ENCODE measurements at regions of chr14 and their contacts with region 1.

Region 1: DNA sequence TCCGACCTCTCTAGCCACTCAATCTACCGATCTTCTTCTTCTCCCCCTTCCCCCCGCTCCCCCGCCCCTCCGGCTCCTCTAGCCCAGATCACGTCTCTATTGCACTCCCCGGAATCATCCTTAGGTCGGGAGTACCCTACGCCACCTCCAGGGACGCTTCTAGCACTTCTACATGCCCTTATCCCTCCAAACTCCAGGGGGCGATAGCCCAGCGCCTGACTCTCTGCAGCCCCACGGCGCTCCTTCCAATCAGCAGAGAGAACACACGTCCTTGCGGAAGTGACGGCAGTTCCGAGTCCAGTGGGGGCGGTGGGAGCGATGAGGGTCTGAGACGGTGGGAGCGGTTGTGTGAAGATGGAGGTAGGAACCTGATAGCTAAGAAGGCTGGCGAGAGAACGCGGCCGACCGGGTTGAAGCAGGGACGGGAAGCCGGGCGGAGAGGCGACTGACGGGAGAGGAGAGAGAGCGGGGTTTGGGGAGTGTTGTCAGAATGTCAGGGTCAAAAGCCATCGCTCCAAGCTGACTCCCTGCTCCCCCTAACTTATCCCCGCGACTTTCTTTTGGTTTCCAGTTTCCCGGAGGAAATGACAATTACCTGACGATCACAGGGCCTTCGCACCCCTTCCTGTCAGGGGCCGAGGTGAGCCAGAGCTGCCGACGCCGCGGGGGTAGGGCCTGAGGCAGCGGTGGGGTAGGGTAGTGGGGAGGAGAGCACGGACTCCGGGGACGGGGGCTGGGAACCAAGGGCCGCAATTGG is at the starts of genes RAB2B and TOX4:
- DNase-seq: peak; percentile 98
- ATAC-seq: peak; percentile 93
- H3K4me3 ChIP-seq: peak within 1 kb of the TSS; percentile 100
- H3K27ac ChIP-seq: peak within 1 kb of the TSS; percentile 61
- H3K4me1 ChIP-seq: peaks cover 13% of the 10 kb centered on the region
- H3K27me3 ChIP-seq: no peaks in the 10 kb centered on the region
- CTCF ChIP-seq: peak; percentile 94
- total RNA-seq, gene RAB2B: 11.7 and 26.8 TPM in 2 replicates
- total RNA-seq, gene TOX4: 26.7 and 38.5 TPM in 2 replicates

Region 2: DNA sequence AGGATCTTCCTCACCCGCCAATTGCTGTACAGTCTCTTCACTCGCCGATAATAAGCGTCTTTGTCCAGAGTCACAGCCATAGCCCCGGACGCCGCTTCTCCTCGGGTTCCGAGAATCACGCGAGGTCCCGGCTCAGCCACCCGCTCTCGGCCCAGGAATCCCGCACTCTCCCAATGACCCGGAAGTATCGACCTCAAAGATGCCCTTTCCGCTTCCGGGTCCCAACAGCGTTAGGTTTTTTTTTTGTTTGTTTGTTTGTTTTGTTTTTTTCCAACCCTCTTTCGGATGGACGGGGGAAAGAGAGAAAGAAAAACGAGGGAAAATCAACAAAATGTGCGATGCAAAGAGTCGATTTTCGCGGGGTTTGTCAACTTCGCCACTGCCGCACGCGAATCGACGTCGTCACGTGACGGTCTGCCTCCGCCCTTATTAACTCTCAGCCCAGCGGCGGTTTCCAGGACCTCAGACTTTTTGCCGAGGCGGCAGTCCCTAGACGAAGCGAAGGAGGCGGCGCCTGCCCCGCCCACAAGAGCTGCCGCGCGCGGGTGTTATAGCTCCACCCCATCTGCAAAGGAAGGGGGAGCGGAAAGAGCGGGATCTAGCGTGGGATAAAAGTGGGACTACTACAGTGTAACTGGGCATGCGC is 93.1 kb before region 1 on chr14 and contains the start of gene SUPT16H:
- CTCF ChIA-PET with region 1: no interaction called
- POLR2A ChIA-PET with region 1: no interaction called
- intact Hi-C with region 1: loop called (anchors 2 kb)
- DNase-seq: peak; percentile 95
- ATAC-seq: peak; percentile 90
- H3K4me3 ChIP-seq: peak within 1 kb of the TSS; percentile 80
- H3K27ac ChIP-seq: peak within 1 kb of the TSS; percentile 86
- H3K4me1 ChIP-seq: peaks cover 14% of the 10 kb centered on the region
- H3K27me3 ChIP-seq: no peaks in the 10 kb centered on the region
- CTCF ChIP-seq: no peak
- total RNA-seq, gene SUPT16H: 92.6 and 102 TPM in 2 replicates

Region 3: GRCh38 chr14:21437063-21437901 is 39.8 kb before region 1 on chr14:
- CTCF ChIA-PET with region 1: interaction called, 4 read pairs
- POLR2A ChIA-PET with region 1: no interaction called
- intact Hi-C with region 1: loop called (anchors 1 kb)
- DNase-seq: peak; percentile 99
- ATAC-seq: peak; percentile 99
- H3K4me3 ChIP-seq: peak overlapping the region; percentile 85
- H3K27ac ChIP-seq: peak overlapping the region; percentile 45
- H3K4me1 ChIP-seq: peaks cover 15% of the 10 kb centered on the region
- H3K27me3 ChIP-seq: no peaks in the 10 kb centered on the region
- CTCF ChIP-seq: no peak

Region 4: DNA sequence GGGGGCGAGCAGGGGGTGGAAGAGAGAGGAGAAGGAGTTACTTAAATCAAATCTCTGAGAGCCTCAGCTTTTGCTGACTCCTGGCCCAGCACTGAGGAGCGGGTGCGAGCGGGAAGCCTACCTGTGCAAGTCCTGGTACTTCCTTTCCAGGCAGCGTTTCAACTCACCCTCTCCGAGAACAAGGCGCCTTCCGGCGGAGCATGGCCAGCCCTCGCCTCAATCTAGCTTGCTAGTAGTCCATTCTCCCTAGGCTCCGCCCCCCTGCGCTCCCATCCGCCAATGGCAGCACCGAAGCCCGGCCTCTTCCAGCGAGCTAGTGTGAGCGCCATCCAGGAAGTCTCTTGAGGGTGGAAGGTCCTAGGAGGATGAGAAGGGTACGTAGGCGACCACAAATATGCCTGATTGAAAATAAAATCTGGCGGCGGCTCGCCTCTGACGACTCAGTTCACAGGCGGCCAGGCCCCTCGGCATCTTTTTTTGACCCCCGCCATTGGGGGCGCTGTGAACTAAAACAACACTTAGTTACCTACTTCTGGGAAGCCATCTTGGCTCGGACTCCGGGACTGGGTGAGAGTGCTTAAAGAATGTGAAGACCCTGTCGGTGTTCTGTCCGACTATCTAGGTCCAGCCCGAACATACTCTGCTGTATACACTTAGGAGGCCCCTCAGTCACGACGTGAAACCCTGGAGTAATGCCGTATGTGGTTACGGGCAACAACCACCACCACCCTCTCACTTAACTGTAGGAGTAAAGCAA is 21.0 kb before region 1 on chr14 and contains the start of gene CHD8:
- CTCF ChIA-PET with region 1: interaction called, 4 read pairs
- POLR2A ChIA-PET with region 1: interaction called, 3 read pairs
- intact Hi-C with region 1: loop called (anchors 1 kb)
- DNase-seq: peak; percentile 99
- ATAC-seq: peak; percentile 98
- H3K4me3 ChIP-seq: peak within 1 kb of the TSS; percentile 97
- H3K27ac ChIP-seq: peak within 1 kb of the TSS; percentile 81
- H3K4me1 ChIP-seq: peaks cover 12% of the 10 kb centered on the region
- H3K27me3 ChIP-seq: no peaks in the 10 kb centered on the region
- CTCF ChIP-seq: peak; percentile 81
- total RNA-seq, gene CHD8: 57.4 and 81.0 TPM in 2 replicates

Region 5: DNA sequence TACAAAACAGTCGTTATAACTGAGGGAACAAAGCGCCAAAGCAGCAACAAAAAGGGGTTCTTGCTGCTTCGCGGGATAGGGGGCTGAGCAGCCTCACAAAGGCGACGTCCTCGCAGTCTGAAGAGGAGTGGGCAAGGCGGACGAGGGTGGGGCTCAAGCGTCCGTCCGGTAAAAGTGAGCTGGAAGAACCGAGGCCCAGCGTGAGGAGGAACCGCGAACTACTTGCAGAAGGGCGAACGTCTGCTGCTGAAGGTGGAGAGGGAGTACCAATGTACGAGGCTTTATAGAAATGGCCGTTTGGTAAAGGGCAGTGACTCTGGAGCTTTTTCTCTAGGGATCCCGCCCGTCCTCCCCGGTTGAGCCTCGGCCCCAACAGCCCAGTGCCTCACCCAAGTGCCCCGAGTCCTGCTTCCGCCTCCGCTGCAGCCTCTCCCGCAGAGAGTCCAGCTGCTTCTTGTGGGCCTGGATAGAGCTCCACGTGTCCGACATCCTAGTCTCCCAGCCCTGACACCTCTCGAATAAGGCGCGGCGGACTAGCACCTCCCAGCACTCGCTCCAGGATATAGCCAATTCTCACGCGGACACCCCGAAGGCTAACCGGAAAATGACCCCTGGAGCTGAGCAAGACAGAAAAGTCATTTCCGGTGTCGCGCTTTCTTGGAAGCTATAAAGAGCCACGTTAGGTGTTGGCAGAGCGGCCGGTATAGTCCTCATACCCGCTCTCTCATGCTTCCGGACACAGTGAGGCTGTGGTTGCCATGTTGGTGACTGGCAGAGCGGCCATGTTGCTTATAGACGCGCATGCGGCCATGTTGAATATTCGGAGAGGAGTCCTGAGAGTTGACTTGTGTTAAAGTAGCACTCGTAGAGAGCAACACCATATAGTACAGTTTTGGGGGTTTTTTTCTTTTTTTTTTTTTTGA is 33.9 kb after region 1 on chr14 and contains the start of gene METTL3:
- CTCF ChIA-PET with region 1: no interaction called
- POLR2A ChIA-PET with region 1: no interaction called
- intact Hi-C with region 1: loop called (anchors 1 kb)
- DNase-seq: peak; percentile 98
- ATAC-seq: peak; percentile 98
- H3K4me3 ChIP-seq: peak within 1 kb of the TSS; percentile 96
- H3K27ac ChIP-seq: peak within 1 kb of the TSS; percentile 83
- H3K4me1 ChIP-seq: peaks cover 18% of the 10 kb centered on the region
- H3K27me3 ChIP-seq: no peaks in the 10 kb centered on the region
- CTCF ChIP-seq: no peak
- total RNA-seq, gene METTL3: 47.6 and 57.1 TPM in 2 replicates

Region 6: GRCh38 chr14:21557084-21557901 is 80.2 kb after region 1 on chr14:
- CTCF ChIA-PET with region 1: no interaction called
- POLR2A ChIA-PET with region 1: no interaction called
- intact Hi-C with region 1: loop called (anchors 1 kb)
- DNase-seq: peak; percentile 96
- ATAC-seq: peak; percentile 85
- H3K4me3 ChIP-seq: peak overlapping the region; percentile 56
- H3K27ac ChIP-seq: no peak overlapping the region
- H3K4me1 ChIP-seq: peaks cover 4% of the 10 kb centered on the region; the same call in 1 of the 2 replicates
- H3K27me3 ChIP-seq: no peaks in the 10 kb centered on the region
- CTCF ChIP-seq: peak; percentile 92